ENCODE measurements at regions of chr1 and their contacts with region 1.

Region 1: GRCh38 chr1:60425528-60425927 is 352.0 kb upstream of the C1orf87 start:
- DNase-seq: no peak
- H3K4me3 ChIP-seq: no peak overlapping the region
- H3K27ac ChIP-seq: no peak overlapping the region
- H3K4me1 ChIP-seq: no peaks in the 10 kb centered on the region
- H3K27me3 ChIP-seq: no peaks in the 10 kb centered on the region
- CTCF ChIP-seq: peak in 2 of 3 experiments; percentile 44 to 66; a peak in 3 of 4 replicates
- EP300 ChIP-seq: no peak
- POLR2A ChIP-seq: no peak
- RAD21 ChIP-seq: peak; percentile 51 to 62

Region 2: GRCh38 chr1:60436186-60436585 is 10.7 kb after region 1 on chr1:
- CTCF ChIA-PET with region 1: interaction called, 15 read pairs
- POLR2A ChIA-PET with region 1: no interaction called
- DNase-seq: no peak
- H3K4me3 ChIP-seq: no peak overlapping the region
- H3K27ac ChIP-seq: no peak overlapping the region
- H3K4me1 ChIP-seq: peaks cover 0 to 3% (median 0%) of the 10 kb centered on the region in 4 experiments; a peak in 1 of 7 replicates
- H3K27me3 ChIP-seq: no peaks in the 10 kb centered on the region
- CTCF ChIP-seq: no peak
- EP300 ChIP-seq: no peak
- POLR2A ChIP-seq: no peak
- RAD21 ChIP-seq: no peak

Region 3: GRCh38 chr1:60448850-60449249 is 23.3 kb after region 1 on chr1:
- CTCF ChIA-PET with region 1: interaction called, 11 read pairs
- POLR2A ChIA-PET with region 1: no interaction called
- DNase-seq: no peak
- H3K4me3 ChIP-seq: no peak overlapping the region
- H3K27ac ChIP-seq: no peak overlapping the region
- H3K4me1 ChIP-seq: no peaks in the 10 kb centered on the region
- H3K27me3 ChIP-seq: no peaks in the 10 kb centered on the region
- CTCF ChIP-seq: no peak
- EP300 ChIP-seq: no peak
- POLR2A ChIP-seq: no peak
- RAD21 ChIP-seq: no peak

Measured in H1 (cell line).